Left ventricle myocardium inferior (tissue), 1 donor: ENCODE measurements at regions of chr2 and their contacts with region 1.

Region 1: DNA sequence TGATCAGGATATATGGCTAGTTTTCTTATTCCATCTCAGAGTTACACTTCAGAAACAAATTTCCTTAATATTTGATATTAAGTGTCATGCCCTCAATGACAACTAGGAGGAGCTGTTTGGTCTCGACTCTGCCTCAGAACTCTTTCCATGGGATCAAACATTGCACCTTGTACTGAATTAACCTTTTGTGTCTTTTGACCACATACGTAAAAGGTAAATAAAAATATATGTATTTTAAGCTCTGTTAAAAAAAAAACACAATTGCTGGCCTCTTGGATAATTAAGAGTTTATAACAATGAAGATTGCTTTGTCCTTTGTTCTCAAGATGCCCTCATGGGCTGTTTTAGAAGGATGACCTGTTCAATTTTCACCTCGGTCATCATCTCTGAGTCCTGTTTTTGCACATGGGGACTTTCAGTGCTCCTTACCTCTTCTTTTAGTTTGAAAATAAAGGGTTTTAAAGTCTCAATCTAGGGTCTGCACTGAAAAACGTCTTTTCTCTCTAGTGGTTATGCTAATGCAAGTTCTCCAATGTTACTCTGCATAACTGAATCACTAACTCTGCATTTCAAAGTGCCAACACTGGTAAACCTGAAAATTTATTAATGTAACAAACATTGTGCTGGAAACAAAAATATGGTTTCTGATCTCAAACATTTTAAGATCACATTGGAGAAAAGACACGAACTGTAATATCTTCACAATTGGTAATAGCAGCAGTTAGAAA is 18.8 kb upstream of the FN1 start:
- DNase-seq: no peak
- H3K4me3 ChIP-seq: no peak overlapping the region
- H3K27ac ChIP-seq: no peak overlapping the region
- H3K4me1 ChIP-seq: no peaks in the 10 kb centered on the region
- H3K27me3 ChIP-seq: no peaks in the 10 kb centered on the region
- CTCF ChIP-seq: peak; percentile 79

Region 2: DNA sequence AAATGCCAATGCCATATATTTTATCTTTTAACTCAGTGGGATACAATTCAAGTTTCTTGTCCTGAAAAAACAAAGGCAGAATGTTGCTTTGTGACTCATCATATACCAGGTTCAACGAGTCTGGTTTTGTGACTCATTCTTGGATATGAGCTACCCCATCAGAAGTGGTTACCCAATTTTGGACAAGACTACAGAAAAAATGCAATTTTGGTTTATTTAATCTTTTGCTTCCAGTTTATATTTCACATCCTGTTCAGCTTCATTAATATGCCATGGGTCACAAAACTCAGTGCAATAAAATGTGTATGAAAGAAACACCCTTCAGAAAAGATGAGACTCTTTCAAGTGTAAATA is 43.8 kb before region 1 on chr2:
- intact Hi-C with region 1: no loop called
- DNase-seq: no peak
- H3K4me3 ChIP-seq: no peak overlapping the region
- H3K27ac ChIP-seq: no peak overlapping the region
- H3K4me1 ChIP-seq: no peaks in the 10 kb centered on the region
- H3K27me3 ChIP-seq: no peaks in the 10 kb centered on the region
- CTCF ChIP-seq: no peak

Region 3: GRCh38 chr2:215917953-215918620 is 463.4 kb after region 1 on chr2:
- intact Hi-C with region 1: loop called (anchors 5 kb)
- DNase-seq: no peak
- H3K4me3 ChIP-seq: no peak overlapping the region
- H3K27ac ChIP-seq: peak overlapping the region; percentile 16
- H3K4me1 ChIP-seq: peaks cover 16% of the 10 kb centered on the region
- H3K27me3 ChIP-seq: no peaks in the 10 kb centered on the region
- CTCF ChIP-seq: no peak

Region 4: DNA sequence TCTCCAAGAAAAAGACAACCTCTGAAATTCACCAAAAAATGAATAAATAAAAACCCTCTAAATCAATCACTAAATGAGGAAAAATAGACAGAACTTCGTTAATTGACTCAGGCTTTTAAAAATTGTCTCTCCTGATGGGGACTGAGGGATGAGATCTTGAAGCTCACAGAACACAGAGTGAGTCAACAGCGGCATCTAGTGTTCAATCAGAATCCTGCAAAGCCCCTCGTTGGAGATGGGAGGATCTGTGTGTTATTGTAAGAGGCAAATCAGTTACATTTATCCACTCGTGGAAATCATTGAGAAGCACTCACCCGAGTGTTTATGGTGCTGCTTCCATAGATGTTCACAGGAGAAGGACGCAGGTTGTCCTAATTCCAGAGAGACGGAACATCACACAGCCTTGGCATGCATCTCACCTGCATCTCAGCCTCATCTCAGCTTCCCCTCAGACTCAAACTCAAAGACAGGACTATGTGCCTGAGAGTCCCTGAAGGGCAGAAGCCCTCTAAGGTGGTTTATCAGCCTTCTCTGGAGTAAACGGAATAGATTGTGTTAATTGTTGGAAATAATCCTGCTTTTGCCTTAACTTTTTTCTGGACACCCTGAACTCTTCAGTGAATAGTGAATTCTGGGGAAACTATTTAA is 476.7 kb after region 1 on chr2:
- intact Hi-C with region 1: loop called (anchors 5 kb)
- DNase-seq: peak; percentile 20
- H3K4me3 ChIP-seq: no peak overlapping the region
- H3K27ac ChIP-seq: no peak overlapping the region
- H3K4me1 ChIP-seq: no peaks in the 10 kb centered on the region
- H3K27me3 ChIP-seq: peaks cover 15% of the 10 kb centered on the region
- CTCF ChIP-seq: peak; percentile 97